SK-N-SH (cell line): ENCODE measurements at regions of chr11 and their contacts with region 1.

Region 1: DNA sequence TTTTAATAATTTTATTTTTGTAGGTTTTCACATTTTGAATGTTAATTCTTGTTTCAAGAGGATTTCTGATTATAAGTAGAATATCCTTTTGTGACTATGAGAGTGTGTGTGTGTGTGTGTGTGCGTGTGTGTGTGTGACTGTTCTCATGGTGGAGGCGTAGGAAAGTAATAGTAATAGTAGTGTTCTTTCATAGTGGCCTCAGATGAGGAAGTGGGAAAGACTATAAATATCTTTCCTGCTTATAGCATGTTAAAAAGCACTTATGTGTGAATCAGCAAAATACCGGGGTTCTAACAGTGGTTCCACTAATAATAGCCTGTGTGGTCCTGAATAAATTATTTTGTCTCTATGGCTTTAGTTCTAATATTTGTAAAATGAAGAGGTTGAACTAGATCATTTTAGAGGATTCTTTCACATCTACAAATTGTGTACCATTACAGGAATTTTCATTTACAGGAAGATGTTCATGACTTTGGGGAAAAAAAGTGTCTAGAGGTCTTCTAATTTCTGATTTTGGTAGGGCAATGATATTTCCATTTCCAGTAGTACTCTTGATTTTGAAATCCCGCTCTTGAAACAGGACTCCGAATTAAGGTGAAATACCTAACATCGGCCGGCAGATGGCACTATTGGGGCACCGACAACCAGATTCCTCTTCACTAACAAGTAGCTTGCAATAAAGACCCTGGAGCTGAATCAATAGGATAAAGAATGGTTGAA is 29.9 kb upstream of the OR10G7 start:
- DNase-seq: peak; percentile 68
- H3K4me3 ChIP-seq: no peak overlapping the region; a peak in 1 of 4 replicates
- H3K27ac ChIP-seq: no peak overlapping the region
- H3K4me1 ChIP-seq: peaks cover 0 to 2% of the 10 kb centered on the region in 2 experiments; a peak in 2 of 4 replicates
- H3K27me3 ChIP-seq: peaks cover 12% of the 10 kb centered on the region; the same call in 1 of the 2 replicates
- CTCF ChIP-seq: peak; percentile 86
- EP300 ChIP-seq: no peak
- RAD21 ChIP-seq: peak; percentile 86

Region 2: GRCh38 chr11:123815122-123815521 is 256.0 kb before region 1 on chr11:
- CTCF ChIA-PET with region 1: no interaction called
- POLR2A ChIA-PET with region 1: no interaction called
- DNase-seq: no peak
- H3K4me3 ChIP-seq: no peak overlapping the region
- H3K27ac ChIP-seq: no peak overlapping the region
- H3K4me1 ChIP-seq: no peaks in the 10 kb centered on the region
- H3K27me3 ChIP-seq: peaks cover 3% of the 10 kb centered on the region; the same call in 1 of the 2 replicates
- CTCF ChIP-seq: no peak
- EP300 ChIP-seq: no peak
- RAD21 ChIP-seq: no peak

Region 3: GRCh38 chr11:123829745-123830144 is 241.3 kb before region 1 on chr11:
- CTCF ChIA-PET with region 1: no interaction called
- POLR2A ChIA-PET with region 1: no interaction called
- DNase-seq: no peak
- H3K4me3 ChIP-seq: no peak overlapping the region
- H3K27ac ChIP-seq: no peak overlapping the region
- H3K4me1 ChIP-seq: no peaks in the 10 kb centered on the region
- H3K27me3 ChIP-seq: no peaks in the 10 kb centered on the region
- CTCF ChIP-seq: no peak
- EP300 ChIP-seq: no peak
- RAD21 ChIP-seq: no peak

Region 4: GRCh38 chr11:124152770-124153407 is 81.8 kb after region 1 on chr11:
- CTCF ChIA-PET with region 1: interaction called, 14 read pairs
- POLR2A ChIA-PET with region 1: no interaction called
- DNase-seq: no peak
- H3K4me3 ChIP-seq: no peak overlapping the region
- H3K27ac ChIP-seq: no peak overlapping the region
- H3K4me1 ChIP-seq: no peaks in the 10 kb centered on the region
- H3K27me3 ChIP-seq: no peaks in the 10 kb centered on the region
- CTCF ChIP-seq: peak; percentile 29; the same call in 1 of the 2 replicates
- EP300 ChIP-seq: no peak
- RAD21 ChIP-seq: no peak

Region 5: GRCh38 chr11:124170801-124171586 is 99.9 kb after region 1 on chr11:
- CTCF ChIA-PET with region 1: interaction called, 10 read pairs
- POLR2A ChIA-PET with region 1: no interaction called
- DNase-seq: no peak
- H3K4me3 ChIP-seq: no peak overlapping the region
- H3K27ac ChIP-seq: no peak overlapping the region
- H3K4me1 ChIP-seq: no peaks in the 10 kb centered on the region
- H3K27me3 ChIP-seq: no peaks in the 10 kb centered on the region
- CTCF ChIP-seq: no peak
- EP300 ChIP-seq: no peak
- RAD21 ChIP-seq: no peak

Region 6: GRCh38 chr11:124194698-124195410 is 123.8 kb after region 1 on chr11:
- CTCF ChIA-PET with region 1: interaction called, 247 read pairs
- POLR2A ChIA-PET with region 1: no interaction called
- DNase-seq: peak; percentile 64
- H3K4me3 ChIP-seq: no peak overlapping the region
- H3K27ac ChIP-seq: no peak overlapping the region
- H3K4me1 ChIP-seq: no peaks in the 10 kb centered on the region
- H3K27me3 ChIP-seq: peaks cover 4% of the 10 kb centered on the region; the same call in 1 of the 2 replicates
- CTCF ChIP-seq: peak; percentile 76
- EP300 ChIP-seq: no peak
- RAD21 ChIP-seq: peak; percentile 77

Region 7: DNA sequence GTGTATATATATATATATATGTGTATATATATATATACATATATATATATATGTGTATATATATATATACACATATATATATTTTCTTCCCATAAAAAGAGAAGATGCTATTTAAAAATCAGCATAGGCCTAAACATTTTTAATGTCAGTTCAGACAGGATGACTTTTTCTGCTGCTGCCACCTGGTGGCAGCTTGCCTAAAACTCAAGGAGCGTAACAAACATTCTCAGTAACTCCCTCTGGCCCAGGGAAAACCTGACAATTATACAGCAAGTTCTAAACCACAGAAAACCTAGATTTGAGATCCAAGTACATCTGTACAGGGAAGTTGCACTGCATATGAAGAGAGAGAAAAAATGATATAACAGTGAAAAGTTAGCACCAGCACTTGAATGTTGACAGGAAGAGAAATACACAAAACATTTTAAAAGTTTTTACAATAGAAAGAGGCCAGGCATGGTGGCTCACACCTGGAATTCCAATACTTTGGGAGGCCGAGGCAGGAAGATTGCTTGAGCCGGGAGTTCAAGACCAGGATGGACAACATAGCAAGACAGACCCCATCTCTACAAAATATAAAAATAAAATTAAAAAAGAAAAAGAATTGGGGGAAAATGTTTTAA is 515.3 kb after region 1 on chr11:
- CTCF ChIA-PET with region 1: interaction called, 11 read pairs
- POLR2A ChIA-PET with region 1: no interaction called
- DNase-seq: peak; percentile 32
- H3K4me3 ChIP-seq: no peak overlapping the region
- H3K27ac ChIP-seq: no peak overlapping the region
- H3K4me1 ChIP-seq: no peaks in the 10 kb centered on the region
- H3K27me3 ChIP-seq: peaks cover 42% of the 10 kb centered on the region; the same call in 1 of the 2 replicates
- CTCF ChIP-seq: peak; percentile 71
- EP300 ChIP-seq: no peak
- RAD21 ChIP-seq: peak; percentile 67